ENCODE measurements at regions of chrX and their contacts with region 1.

Region 1: DNA sequence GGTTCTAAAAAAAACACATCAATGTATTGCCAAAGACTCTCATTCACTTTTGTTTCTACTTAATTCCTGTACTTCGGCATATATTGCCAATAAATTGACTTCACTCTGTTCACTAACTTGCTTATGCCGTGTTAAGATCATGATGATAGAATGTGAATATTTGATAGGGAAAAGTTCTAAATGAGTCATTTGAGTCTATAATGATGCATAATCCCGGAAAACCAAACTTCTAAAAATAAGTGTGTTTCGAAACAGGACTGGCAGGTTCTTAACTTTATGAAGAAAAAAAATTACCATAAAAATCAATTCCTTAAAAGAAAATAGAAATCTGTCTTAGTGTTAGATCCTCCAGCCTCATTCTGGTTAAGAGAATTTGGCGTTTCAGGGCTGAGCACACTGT is 387.5 kb upstream of the FTHL17 start:
- DNase-seq: no peak
- H3K4me3 ChIP-seq: no peak overlapping the region
- H3K27ac ChIP-seq: no peak overlapping the region
- H3K4me1 ChIP-seq: no peaks in the 10 kb centered on the region
- H3K27me3 ChIP-seq: no peaks in the 10 kb centered on the region
- CTCF ChIP-seq: no peak
- EP300 ChIP-seq: no peak
- POLR2A ChIP-seq: no peak

Region 2: DNA sequence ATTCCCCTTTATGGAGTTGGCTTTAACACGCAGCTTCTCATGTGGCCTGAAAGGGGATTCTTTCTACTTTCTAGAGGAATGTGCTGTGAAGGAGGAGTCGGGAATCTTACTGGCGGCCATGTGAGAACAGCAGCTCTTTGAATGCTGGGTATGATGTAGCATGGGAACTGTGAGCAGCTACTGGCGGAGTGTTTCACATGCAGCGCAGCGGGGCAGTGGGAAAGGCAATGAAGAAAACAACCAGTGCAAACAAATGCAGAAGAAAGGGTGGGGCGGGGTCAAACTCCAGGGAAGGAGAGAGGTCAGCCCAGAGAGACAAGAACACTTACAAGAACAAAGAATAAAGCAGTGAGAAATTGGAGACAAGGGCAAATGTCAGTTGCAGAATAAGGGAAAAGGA is 23.8 kb before region 1 on chrX:
- in situ Hi-C with region 1: no loop called
- intact Hi-C with region 1: loop called (anchors 2 kb)
- DNase-seq: peak; percentile 70
- H3K4me3 ChIP-seq: no peak overlapping the region
- H3K27ac ChIP-seq: no peak overlapping the region
- H3K4me1 ChIP-seq: peaks cover 0 to 7% (median 0%) of the 10 kb centered on the region in 4 donors
- H3K27me3 ChIP-seq: no peaks in the 10 kb centered on the region
- CTCF ChIP-seq: no peak
- EP300 ChIP-seq: no peak
- POLR2A ChIP-seq: no peak

Region 3: GRCh38 chrX:31555506-31555905 is 96.1 kb after region 1 on chrX:
- in situ Hi-C with region 1: loop called in 1 of 4 experiments (anchors 25 kb)
- intact Hi-C with region 1: no loop called
- DNase-seq: no peak
- H3K4me3 ChIP-seq: no peak overlapping the region
- H3K27ac ChIP-seq: no peak overlapping the region
- H3K4me1 ChIP-seq: no peaks in the 10 kb centered on the region
- H3K27me3 ChIP-seq: no peaks in the 10 kb centered on the region
- CTCF ChIP-seq: no peak
- EP300 ChIP-seq: no peak
- POLR2A ChIP-seq: no peak